ENCODE measurements at regions of chr12 and their contacts with region 1.

Region 1: GRCh38 chr12:26832822-26833742 is at the start of gene ITPR2:
- DNase-seq: peak; percentile 97
- ATAC-seq: peak; percentile 91
- H3K4me3 Mint-ChIP-seq: peak within 1 kb of the TSS; percentile 96
- H3K27ac Mint-ChIP-seq: peak within 1 kb of the TSS; percentile 99
- H3K4me1 Mint-ChIP-seq: peaks cover 37% of the 10 kb centered on the region
- H3K27me3 Mint-ChIP-seq: no peaks in the 10 kb centered on the region
- total RNA-seq, gene ITPR2: 27.3 to 28.6 TPM

Region 2: DNA sequence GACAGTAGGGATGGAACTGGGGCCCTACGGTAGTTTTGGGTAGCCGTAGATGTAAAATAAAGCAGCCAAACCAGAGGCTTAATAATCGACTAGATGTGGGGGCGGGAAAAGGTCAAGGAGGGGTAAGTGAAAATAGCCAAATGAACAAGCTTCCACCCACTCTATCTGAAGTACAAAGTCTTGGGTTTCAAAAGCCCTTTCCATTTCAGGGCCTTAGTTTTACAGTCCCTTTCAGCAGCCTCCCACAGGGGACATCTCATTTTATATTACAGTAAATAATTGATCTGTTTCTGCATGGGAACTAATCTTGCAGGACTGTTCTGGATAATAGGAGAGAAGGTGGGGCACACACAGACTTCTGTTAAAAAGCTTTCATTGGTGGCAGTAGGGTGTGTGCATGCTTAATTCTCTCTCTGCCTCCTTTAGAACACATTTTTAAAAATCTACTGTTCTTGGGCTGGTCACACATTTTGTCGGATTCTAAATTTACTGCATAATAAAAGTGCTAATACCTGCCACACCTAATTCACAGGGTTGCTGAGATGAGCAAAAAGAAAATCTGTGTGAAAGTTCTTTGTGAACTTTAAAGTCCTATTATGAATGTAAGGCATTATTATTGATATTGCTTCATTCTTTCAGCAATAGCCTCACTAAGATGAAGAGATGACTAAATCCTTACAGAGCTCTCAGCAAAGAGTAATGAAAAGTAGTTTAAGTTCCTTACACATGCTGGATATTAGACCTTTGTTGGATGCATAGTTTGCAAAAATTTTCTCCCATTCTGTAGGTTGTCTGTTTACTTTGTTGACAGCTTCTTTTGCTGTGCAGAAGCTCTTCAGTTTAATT is 104.7 kb before region 1 on chr12:
- CTCF ChIA-PET with region 1: no interaction called
- POLR2A ChIA-PET with region 1: no interaction called
- intact Hi-C with region 1: loop called in 1 of 2 experiments (anchors 5 kb)
- DNase-seq: peak; percentile 21
- ATAC-seq: peak; percentile 27
- H3K4me3 Mint-ChIP-seq: no peak overlapping the region
- H3K27ac Mint-ChIP-seq: no peak overlapping the region
- H3K4me1 Mint-ChIP-seq: peaks cover 58% of the 10 kb centered on the region
- H3K27me3 Mint-ChIP-seq: no peaks in the 10 kb centered on the region

Region 3: GRCh38 chr12:26808766-26809476 is 24.2 kb before region 1 on chr12:
- CTCF ChIA-PET with region 1: interaction called, 11 read pairs
- POLR2A ChIA-PET with region 1: interaction called, 5 read pairs
- intact Hi-C with region 1: no loop called
- DNase-seq: no peak
- ATAC-seq: peak; percentile 87
- H3K4me3 Mint-ChIP-seq: no peak overlapping the region
- H3K27ac Mint-ChIP-seq: peak overlapping the region; percentile 63
- H3K4me1 Mint-ChIP-seq: peaks cover 42% of the 10 kb centered on the region
- H3K27me3 Mint-ChIP-seq: no peaks in the 10 kb centered on the region

Region 4: GRCh38 chr12:26884765-26885576 is 51.9 kb after region 1 on chr12:
- CTCF ChIA-PET with region 1: interaction called, 6 read pairs
- POLR2A ChIA-PET with region 1: interaction called, 3 read pairs
- intact Hi-C with region 1: loop called (anchors 1 to 10 kb)
- DNase-seq: peak; percentile 89
- ATAC-seq: peak; percentile 97
- H3K4me3 Mint-ChIP-seq: peak overlapping the region; percentile 49
- H3K27ac Mint-ChIP-seq: no peak overlapping the region
- H3K4me1 Mint-ChIP-seq: peaks cover 10% of the 10 kb centered on the region
- H3K27me3 Mint-ChIP-seq: peaks cover 2% of the 10 kb centered on the region

Region 5: DNA sequence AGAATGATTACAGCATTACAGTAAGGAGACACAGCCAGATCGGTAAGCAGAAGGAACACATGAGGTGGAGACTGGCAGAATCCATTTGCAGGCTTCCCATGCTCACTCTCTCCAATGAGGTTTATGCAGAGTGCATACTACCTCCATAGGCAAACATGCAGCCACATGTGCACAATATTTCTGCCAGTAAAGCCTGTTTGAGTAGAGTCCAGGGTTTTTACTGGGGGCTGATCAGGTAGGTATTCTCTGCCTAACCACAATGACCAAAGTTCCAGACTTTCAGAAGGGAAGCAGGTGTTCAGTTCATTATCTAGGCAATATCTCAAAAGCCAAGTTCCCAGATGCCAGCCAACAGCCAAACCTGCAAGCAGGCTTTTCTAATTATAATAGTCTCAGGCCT is 73.6 kb after region 1 on chr12:
- CTCF ChIA-PET with region 1: no interaction called
- POLR2A ChIA-PET with region 1: no interaction called
- intact Hi-C with region 1: no loop called
- DNase-seq: no peak
- ATAC-seq: no peak
- H3K4me3 Mint-ChIP-seq: no peak overlapping the region
- H3K27ac Mint-ChIP-seq: no peak overlapping the region
- H3K4me1 Mint-ChIP-seq: no peaks in the 10 kb centered on the region
- H3K27me3 Mint-ChIP-seq: no peaks in the 10 kb centered on the region

Region 6: DNA sequence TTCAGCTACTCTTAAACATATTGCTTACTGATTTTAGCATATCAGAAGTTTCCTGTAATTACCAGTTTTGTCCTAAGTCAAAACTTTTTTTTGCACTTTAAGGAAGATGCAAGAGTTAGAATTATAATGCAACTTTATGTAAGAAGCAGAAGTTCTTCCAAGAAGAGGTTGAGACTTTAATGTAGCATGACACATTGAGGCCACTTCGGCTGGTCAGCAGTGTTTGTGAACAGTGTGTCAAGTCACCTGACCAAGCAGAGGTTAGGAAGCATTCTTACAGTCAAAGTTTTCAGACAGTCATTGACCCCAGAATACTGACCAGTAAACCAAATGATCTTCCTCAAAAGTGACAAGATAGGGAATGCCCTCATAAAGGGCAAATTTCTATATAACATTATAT is 120.4 kb after region 1 on chr12:
- CTCF ChIA-PET with region 1: interaction called, 11 read pairs
- POLR2A ChIA-PET with region 1: no interaction called
- intact Hi-C with region 1: no loop called
- DNase-seq: no peak
- ATAC-seq: peak; percentile 30
- H3K4me3 Mint-ChIP-seq: no peak overlapping the region
- H3K27ac Mint-ChIP-seq: no peak overlapping the region
- H3K4me1 Mint-ChIP-seq: peaks cover 36% of the 10 kb centered on the region
- H3K27me3 Mint-ChIP-seq: no peaks in the 10 kb centered on the region

Region 7: GRCh38 chr12:27109334-27110028 is 276.4 kb after region 1 on chr12:
- CTCF ChIA-PET with region 1: no interaction called
- POLR2A ChIA-PET with region 1: no interaction called
- intact Hi-C with region 1: no loop called
- DNase-seq: no peak
- ATAC-seq: peak; percentile 7
- H3K4me3 Mint-ChIP-seq: no peak overlapping the region
- H3K27ac Mint-ChIP-seq: no peak overlapping the region
- H3K4me1 Mint-ChIP-seq: peaks cover 11% of the 10 kb centered on the region
- H3K27me3 Mint-ChIP-seq: no peaks in the 10 kb centered on the region